ENCODE measurements at regions of chr9 and their contacts with region 1.

Region 1: DNA sequence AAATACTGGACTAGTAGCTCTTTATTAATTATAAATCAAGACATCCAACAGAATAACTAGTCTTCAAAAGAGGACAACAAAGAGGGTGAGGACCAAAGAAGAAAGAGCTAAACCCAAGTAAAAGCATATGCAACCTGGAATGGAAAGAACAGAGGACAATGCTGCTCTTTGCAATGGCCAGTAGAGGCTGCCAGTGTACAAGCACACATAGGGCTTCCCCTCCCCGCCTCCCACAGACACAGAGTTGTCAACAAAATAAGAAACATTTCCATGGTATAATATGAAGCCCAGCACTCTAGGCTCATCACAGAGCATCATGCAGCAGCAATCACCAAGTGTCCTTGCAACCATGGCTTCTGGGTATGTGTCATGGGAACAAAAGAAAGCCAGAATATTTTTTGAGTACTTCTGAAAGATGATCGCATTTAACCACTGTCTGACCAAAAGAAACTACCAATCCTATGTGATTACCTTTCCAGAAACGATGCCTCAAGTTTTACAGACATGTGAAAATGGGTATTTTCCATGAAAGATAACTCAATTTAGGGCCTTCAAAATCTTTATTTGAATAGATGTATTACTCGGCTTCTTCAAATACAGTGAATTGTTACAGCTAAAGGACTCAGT is 58.1 kb downstream of the RFX3 start:
- H3K4me3 Mint-ChIP-seq: no peak overlapping the region
- H3K27ac Mint-ChIP-seq: no peak overlapping the region
- H3K4me1 Mint-ChIP-seq: peaks cover 5% of the 10 kb centered on the region
- H3K27me3 Mint-ChIP-seq: no peaks in the 10 kb centered on the region

Region 2: DNA sequence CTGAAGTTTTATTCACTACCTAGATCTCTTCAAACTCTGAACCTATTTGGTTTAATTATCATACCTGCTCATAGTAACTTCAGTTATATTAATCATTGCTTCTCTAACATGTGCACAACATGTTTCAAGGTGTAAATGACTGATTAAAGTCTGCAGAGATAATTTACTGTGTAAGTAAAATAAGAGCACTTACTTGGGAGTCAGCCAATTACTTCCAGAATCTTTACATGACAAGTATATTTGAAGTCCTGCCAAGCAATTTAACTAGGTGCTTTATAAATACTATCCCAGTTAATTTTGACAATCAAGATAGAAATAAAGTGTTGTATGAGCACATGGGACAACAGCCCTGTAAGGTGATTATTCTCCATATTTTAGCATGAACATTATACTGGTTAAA is 51.8 kb before region 1 on chr9:
- intact Hi-C with region 1: no loop called
- H3K4me3 Mint-ChIP-seq: no peak overlapping the region
- H3K27ac Mint-ChIP-seq: no peak overlapping the region
- H3K4me1 Mint-ChIP-seq: no peaks in the 10 kb centered on the region
- H3K27me3 Mint-ChIP-seq: no peaks in the 10 kb centered on the region

Region 3: DNA sequence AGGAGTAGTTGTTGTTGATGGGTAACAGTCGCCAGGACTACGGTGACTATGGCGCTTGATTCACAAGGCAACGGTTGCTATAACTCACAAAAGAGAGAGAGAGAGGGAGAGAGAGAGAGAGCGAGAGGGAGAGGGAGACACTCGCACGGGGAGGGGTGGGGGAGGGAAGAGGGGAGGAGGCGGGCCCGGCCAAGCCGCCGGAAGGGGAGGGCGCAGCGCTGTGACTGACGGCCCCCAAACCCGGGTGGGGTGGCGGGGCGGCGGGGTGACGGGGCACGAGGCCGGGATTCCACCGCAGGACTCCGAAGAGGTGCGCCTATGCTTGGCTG is 58.1 kb after region 1 on chr9 and contains the start of gene RFX3:
- intact Hi-C with region 1: loop called (anchors 5 kb)
- H3K4me3 Mint-ChIP-seq: peak within 1 kb of the TSS; percentile 96
- H3K27ac Mint-ChIP-seq: peak within 1 kb of the TSS; percentile 100
- H3K4me1 Mint-ChIP-seq: peaks cover 38% of the 10 kb centered on the region
- H3K27me3 Mint-ChIP-seq: no peaks in the 10 kb centered on the region

Region 4: GRCh38 chr9:3647652-3648051 is 179.9 kb after region 1 on chr9:
- intact Hi-C with region 1: loop called (anchors 10 kb)
- H3K4me3 Mint-ChIP-seq: no peak overlapping the region
- H3K27ac Mint-ChIP-seq: no peak overlapping the region
- H3K4me1 Mint-ChIP-seq: no peaks in the 10 kb centered on the region
- H3K27me3 Mint-ChIP-seq: no peaks in the 10 kb centered on the region

Region 5: GRCh38 chr9:3721096-3721495 is 253.4 kb after region 1 on chr9:
- intact Hi-C with region 1: loop called (anchors 10 kb)
- H3K4me3 Mint-ChIP-seq: no peak overlapping the region
- H3K27ac Mint-ChIP-seq: no peak overlapping the region
- H3K4me1 Mint-ChIP-seq: no peaks in the 10 kb centered on the region
- H3K27me3 Mint-ChIP-seq: no peaks in the 10 kb centered on the region

Region 6: GRCh38 chr9:4228606-4229005 is 760.9 kb after region 1 on chr9:
- intact Hi-C with region 1: loop called (anchors 10 kb)
- H3K4me3 Mint-ChIP-seq: no peak overlapping the region
- H3K27ac Mint-ChIP-seq: no peak overlapping the region
- H3K4me1 Mint-ChIP-seq: peaks cover 20% of the 10 kb centered on the region
- H3K27me3 Mint-ChIP-seq: no peaks in the 10 kb centered on the region

Measured in dendritic cell treated with granulocyte-macrophage colony-stimulating factor and Interleukin-4, amounts not matched to agents 40 ng/mL and 50 ng/mL, for 4 days (primary cell).